ENCODE measurements at regions of chr16 and their contacts with region 1.

Region 1: DNA sequence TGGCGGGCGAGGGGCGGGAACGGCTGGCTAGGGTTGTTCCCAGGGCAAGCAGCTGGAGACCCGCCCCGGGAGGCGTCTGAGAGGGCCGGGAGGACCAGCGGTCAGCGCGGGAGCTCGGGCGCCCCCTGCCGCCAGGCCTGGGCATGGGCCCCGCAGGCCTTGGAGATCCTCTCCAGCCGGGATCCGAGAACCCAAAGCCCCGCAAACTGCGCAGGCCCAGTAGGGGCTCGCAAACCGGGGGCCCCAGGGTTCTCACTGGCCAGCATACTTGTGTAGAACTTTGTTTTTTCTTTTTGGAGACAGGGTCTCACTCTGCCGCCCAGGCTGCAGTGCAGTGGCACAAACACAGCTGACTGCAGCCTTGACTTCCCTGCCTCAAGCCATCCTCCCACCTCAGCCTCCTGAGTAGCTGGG is 20.8 kb upstream of the ZNF423 start:
- DNase-seq: peak; percentile 86
- H3K4me3 ChIP-seq: peak overlapping the region; percentile 13 to 44 (median 21)
- H3K27ac ChIP-seq: peak overlapping the region; percentile 23 to 75 (median 42)
- H3K4me1 ChIP-seq: peaks cover 6 to 32% (median 23%) of the 10 kb centered on the region in 4 donors
- H3K27me3 ChIP-seq: peaks cover 3% of the 10 kb centered on the region
- CTCF ChIP-seq: peak; percentile 77 to 96 (median 93)
- EP300 ChIP-seq: no peak
- POLR2A ChIP-seq: no peak

Region 2: GRCh38 chr16:49498666-49499413 is 377.9 kb before region 1 on chr16:
- in situ Hi-C with region 1: no loop called
- intact Hi-C with region 1: loop called (anchors 5 kb)
- DNase-seq: no peak
- H3K4me3 ChIP-seq: no peak overlapping the region
- H3K27ac ChIP-seq: no peak overlapping the region
- H3K4me1 ChIP-seq: no peaks in the 10 kb centered on the region
- H3K27me3 ChIP-seq: no peaks in the 10 kb centered on the region
- CTCF ChIP-seq: no peak
- EP300 ChIP-seq: no peak
- POLR2A ChIP-seq: no peak

Measured in transverse colon (tissue), 4 donors.